Caco-2 (cell line): ENCODE measurements at regions of chr1 and their contacts with region 1.

Region 1: GRCh38 chr1:15617175-15617880 is at the start of gene DDI2:
- DNase-seq: peak; percentile 96 to 97
- H3K4me3 ChIP-seq: peak within 1 kb of the TSS; percentile 95
- H3K4me3 Mint-ChIP-seq: peak within 1 kb of the TSS; percentile 88
- H3K27ac Mint-ChIP-seq: peak within 1 kb of the TSS; percentile 86
- H3K4me1 ChIP-seq: peaks cover 33% of the 10 kb centered on the region
- H3K4me1 Mint-ChIP-seq: peaks cover 27% of the 10 kb centered on the region
- H3K27me3 ChIP-seq: no peaks in the 10 kb centered on the region
- H3K27me3 Mint-ChIP-seq: no peaks in the 10 kb centered on the region
- CTCF ChIP-seq: no peak
- total RNA-seq, gene DDI2: 53.1 and 53.4 TPM in 2 replicates

Region 2: DNA sequence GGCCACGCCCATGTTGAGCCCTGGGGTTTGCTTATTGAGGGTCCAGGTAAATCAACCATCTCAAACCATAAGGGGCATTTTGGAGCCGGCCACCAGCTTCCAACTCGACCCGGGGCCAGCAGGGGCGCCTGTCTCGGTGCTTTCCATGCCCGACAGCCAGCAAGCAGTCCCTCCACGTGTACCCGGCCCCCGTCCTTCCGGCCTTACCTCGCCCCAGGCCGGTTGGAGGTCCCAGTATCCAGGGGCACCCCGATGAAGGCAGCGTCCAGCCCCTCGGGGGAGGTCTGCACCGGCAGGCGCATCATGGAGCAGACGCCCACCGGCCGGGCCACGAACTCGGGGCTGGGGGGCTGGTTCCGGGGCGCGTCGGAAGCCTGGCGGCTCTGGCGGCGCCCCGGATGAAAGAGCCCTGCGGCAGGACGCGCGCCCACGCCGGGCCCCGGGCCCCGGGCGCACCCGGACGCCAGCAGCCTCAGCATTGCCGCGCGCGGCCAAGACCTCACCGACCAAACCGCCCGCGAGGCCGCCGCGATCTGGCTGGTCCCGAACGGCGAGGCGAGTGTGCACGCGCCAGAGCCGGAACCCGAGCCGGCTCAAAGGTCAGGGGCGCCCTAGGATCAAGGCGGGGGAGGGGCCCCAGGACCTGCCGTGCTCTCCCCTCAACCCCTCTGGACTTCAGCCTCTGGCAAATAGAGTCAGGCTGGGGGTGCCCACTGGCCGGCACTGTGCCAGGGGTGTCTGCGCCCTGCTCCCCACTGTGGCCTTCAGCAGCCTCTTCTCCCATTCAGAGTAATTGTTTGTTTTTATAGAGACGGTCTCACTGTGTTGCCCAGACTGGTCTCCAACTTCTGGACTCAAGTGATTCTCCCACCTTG is 32.6 kb before region 1 on chr1 and contains the start of gene AGMAT:
- CTCF ChIA-PET with region 1: no interaction called
- POLR2A ChIA-PET with region 1: no interaction called
- intact Hi-C with region 1: loop called (anchors 2 kb)
- DNase-seq: peak; percentile 77 to 81
- H3K4me3 ChIP-seq: peak within 1 kb of the TSS; percentile 91
- H3K4me3 Mint-ChIP-seq: peak within 1 kb of the TSS; percentile 76
- H3K27ac Mint-ChIP-seq: peak within 1 kb of the TSS; percentile 61
- H3K4me1 ChIP-seq: peaks cover 6% of the 10 kb centered on the region; the same call in 1 of the 2 replicates
- H3K4me1 Mint-ChIP-seq: no peaks in the 10 kb centered on the region
- H3K27me3 ChIP-seq: no peaks in the 10 kb centered on the region
- H3K27me3 Mint-ChIP-seq: no peaks in the 10 kb centered on the region
- CTCF ChIP-seq: peak; percentile 43 to 57
- total RNA-seq, gene AGMAT: 46.5 and 48.3 TPM in 2 replicates

Region 3: DNA sequence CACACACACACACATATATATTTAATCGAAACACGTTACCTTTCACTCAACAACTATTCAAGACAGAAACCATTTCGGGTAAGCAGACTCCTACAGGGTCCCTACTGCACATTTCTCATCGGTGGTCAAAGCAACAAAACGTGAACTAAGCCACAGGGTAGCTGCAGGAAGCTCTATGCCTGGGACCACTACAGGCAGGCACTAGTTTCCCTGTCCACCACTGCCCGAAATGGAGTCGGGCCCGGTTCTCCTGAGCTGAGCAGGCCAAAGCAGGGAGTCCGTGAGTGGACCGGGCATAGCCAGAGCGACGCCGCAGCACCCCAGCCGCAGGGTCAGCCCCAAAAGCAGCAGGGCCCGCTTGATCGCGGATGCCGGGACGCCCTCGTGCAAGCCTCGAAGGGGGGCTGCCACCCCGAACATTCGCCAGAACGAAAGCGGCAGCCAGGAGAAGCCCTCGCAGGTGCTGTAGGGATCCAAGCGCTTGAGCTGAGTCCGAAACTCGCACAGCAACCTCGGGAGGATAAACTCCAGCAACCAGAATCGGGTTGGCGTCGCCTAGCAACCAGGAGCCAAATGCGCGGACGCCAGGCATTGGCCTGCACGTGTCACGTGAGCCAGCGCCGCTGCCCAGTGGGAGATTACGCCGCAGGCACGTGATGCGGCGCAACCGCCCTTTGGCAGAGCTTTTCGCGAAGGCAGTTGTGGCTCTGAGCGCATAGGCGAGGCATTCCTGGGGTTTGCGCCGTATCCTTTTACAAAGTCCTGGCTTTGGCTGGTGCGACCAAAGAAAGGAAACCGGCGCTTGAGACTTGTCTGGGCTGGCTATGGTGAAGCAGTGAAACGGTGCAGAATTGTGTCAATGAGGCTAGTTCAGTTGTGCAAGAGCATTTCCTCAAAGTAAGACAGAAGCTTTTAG is 14.0 kb before region 1 on chr1:
- CTCF ChIA-PET with region 1: interaction called, 4 read pairs
- POLR2A ChIA-PET with region 1: interaction called, 8 read pairs
- intact Hi-C with region 1: loop called (anchors 1 kb)
- DNase-seq: peak; percentile 95
- H3K4me3 ChIP-seq: peak overlapping the region; percentile 50
- H3K4me3 Mint-ChIP-seq: peak overlapping the region; percentile 78
- H3K27ac Mint-ChIP-seq: peak overlapping the region; percentile 96
- H3K4me1 ChIP-seq: peaks cover 4% of the 10 kb centered on the region; the same call in 1 of the 2 replicates
- H3K4me1 Mint-ChIP-seq: no peaks in the 10 kb centered on the region
- H3K27me3 ChIP-seq: no peaks in the 10 kb centered on the region
- H3K27me3 Mint-ChIP-seq: no peaks in the 10 kb centered on the region
- CTCF ChIP-seq: no peak